Heart left ventricle (tissue), 16 donors: ENCODE measurements at regions of chr11 and their contacts with region 1.

Region 1: DNA sequence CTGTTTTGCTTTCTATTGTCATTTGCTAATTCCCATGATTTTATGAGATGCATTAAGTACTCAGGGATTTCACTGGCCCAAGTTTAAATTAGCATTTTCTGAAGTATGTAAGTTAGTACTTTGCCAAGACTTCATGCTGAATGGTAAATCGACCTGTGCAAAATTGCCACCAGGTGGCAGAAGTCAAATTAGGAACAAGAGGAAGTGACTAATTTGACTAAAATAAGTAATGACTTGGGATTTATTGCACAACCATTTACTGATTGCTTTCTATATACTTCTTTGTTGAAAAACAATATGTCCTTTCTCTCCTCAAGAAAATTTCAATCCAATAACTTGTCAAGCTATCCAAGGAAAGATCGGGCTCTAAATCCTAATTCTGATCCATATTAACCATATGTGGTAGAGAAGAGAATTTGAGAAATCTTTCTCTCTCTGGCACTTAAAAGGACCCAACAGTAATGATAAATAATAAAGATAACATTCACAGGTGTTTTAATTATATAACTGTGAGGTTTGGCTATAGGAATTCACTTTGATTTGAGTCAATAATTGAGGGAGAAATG is 253.7 kb upstream of the CHORDC1 start:
- DNase-seq: peak in 2 of 5 donors; percentile 23 to 30
- ATAC-seq: no peak
- H3K4me3 ChIP-seq: no peak overlapping the region
- H3K27ac ChIP-seq: no peak overlapping the region
- H3K4me1 ChIP-seq: no peaks in the 10 kb centered on the region
- H3K27me3 ChIP-seq: no peaks in the 10 kb centered on the region
- CTCF ChIP-seq: peak; percentile 16 to 62 (median 44)
- POLR2A ChIP-seq: no peak

Region 2: GRCh38 chr11:90326647-90327046 is 149.9 kb before region 1 on chr11:
- intact Hi-C with region 1: no loop called
- DNase-seq: no peak
- ATAC-seq: no peak
- H3K4me3 ChIP-seq: no peak overlapping the region
- H3K27ac ChIP-seq: no peak overlapping the region
- H3K4me1 ChIP-seq: no peaks in the 10 kb centered on the region
- H3K27me3 ChIP-seq: no peaks in the 10 kb centered on the region
- CTCF ChIP-seq: no peak
- POLR2A ChIP-seq: no peak

Region 3: GRCh38 chr11:90392692-90393091 is 83.8 kb before region 1 on chr11:
- intact Hi-C with region 1: no loop called
- DNase-seq: no peak
- ATAC-seq: no peak
- H3K4me3 ChIP-seq: no peak overlapping the region
- H3K27ac ChIP-seq: no peak overlapping the region
- H3K4me1 ChIP-seq: no peaks in the 10 kb centered on the region
- H3K27me3 ChIP-seq: no peaks in the 10 kb centered on the region
- CTCF ChIP-seq: no peak
- POLR2A ChIP-seq: no peak

Region 4: DNA sequence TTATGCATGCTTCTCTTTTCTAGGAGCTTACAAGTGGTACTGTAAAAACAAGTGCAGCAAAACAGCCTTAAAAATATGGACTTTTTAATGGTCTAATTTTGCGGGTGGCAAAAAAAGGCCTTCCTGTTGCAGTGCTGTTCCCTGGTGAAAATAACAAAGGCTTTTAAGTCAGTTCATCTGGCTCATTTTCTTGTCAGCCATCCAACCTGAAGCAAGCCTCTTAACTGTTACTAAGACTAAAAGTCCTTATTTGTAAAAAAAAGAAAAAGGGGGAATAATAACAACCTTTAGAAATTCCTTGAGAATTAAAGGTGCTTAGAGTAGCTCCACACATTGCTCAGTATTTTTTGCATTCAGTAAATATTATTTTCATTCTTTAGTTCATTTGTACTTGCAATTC is 53.1 kb before region 1 on chr11:
- intact Hi-C with region 1: no loop called
- DNase-seq: no peak
- ATAC-seq: no peak
- H3K4me3 ChIP-seq: no peak overlapping the region
- H3K27ac ChIP-seq: no peak overlapping the region
- H3K4me1 ChIP-seq: peaks cover 0 to 7% (median 0%) of the 10 kb centered on the region in 12 donors
- H3K27me3 ChIP-seq: no peaks in the 10 kb centered on the region
- CTCF ChIP-seq: no peak
- POLR2A ChIP-seq: no peak

Region 5: DNA sequence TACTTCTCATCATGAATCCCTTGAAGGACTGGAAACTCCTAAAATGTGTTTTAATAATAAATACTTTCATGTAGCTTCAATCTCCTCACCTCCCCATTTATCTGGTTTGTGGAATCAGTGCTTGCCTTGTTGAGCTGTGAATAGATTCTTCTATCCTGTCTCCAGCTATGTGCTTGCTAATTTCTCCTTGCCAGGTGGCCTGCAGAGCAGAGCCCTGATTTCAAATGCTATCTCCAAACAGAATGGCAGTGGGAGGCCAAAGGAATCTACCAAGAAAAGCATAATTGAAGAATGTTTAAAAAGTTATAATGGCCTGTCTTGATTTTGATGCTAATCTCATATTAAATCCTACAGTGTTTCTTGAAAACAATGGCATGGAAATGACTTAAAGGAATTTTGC is 55.6 kb after region 1 on chr11:
- intact Hi-C with region 1: loop called in 1 of 10 experiments (anchors 10 kb)
- DNase-seq: no peak
- ATAC-seq: no peak
- H3K4me3 ChIP-seq: no peak overlapping the region
- H3K27ac ChIP-seq: no peak overlapping the region
- H3K4me1 ChIP-seq: no peaks in the 10 kb centered on the region
- H3K27me3 ChIP-seq: no peaks in the 10 kb centered on the region
- CTCF ChIP-seq: no peak
- POLR2A ChIP-seq: no peak

Region 6: DNA sequence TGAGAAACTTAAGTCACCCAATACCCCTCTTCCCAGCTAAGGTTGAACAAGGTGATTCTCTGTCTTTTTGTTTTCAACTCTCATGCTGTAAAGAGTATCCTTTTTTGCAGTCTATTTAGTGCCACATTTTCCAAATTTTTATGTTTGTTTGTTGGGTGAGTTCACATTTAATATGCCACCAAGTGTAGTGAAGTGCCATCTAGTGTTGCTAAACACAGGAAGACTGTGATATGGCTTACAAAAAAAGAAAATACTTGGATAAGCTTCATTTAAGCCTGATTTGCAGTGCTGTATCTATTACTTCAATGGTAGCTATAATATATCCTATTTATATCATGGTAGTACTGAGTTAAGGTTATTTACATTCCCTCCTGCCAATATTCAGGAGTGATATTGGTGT is 65.6 kb after region 1 on chr11:
- intact Hi-C with region 1: loop called in 3 of 10 experiments (anchors 5 to 10 kb)
- DNase-seq: no peak
- ATAC-seq: peak in 1 of 4 donors; percentile 41
- H3K4me3 ChIP-seq: no peak overlapping the region
- H3K27ac ChIP-seq: no peak overlapping the region
- H3K4me1 ChIP-seq: no peaks in the 10 kb centered on the region
- H3K27me3 ChIP-seq: no peaks in the 10 kb centered on the region
- CTCF ChIP-seq: peak in 6 of 12 donors; percentile 20 to 47 (median 24)
- POLR2A ChIP-seq: no peak